Naive thymus-derived CD4-positive, alpha-beta T cell (primary cell): ENCODE measurements at regions of chr13 and their contacts with region 1.

Region 1: GRCh38 chr13:49996951-49997895 is at the start of gene TRIM13:
- DNase-seq: peak; percentile 64 to 85 (median 82)
- ATAC-seq: peak; percentile 88
- H3K4me3 ChIP-seq: peak within 1 kb of the TSS; percentile 97
- H3K4me3 Mint-ChIP-seq: peak within 1 kb of the TSS; percentile 83 to 95 (median 86)
- H3K27ac ChIP-seq: peak within 1 kb of the TSS; percentile 89
- H3K27ac Mint-ChIP-seq: peak within 1 kb of the TSS; percentile 84 to 92 (median 87)
- H3K4me1 ChIP-seq: peaks cover 25 to 31% of the 10 kb centered on the region in 2 donors
- H3K4me1 Mint-ChIP-seq: peaks cover 16 to 57% (median 49%) of the 10 kb centered on the region in 7 donors
- H3K27me3 ChIP-seq: no peaks in the 10 kb centered on the region
- H3K27me3 Mint-ChIP-seq: no peaks in the 10 kb centered on the region
- total RNA-seq, gene TRIM13: 18.3 to 27.1 (median 21.8) TPM

Region 2: DNA sequence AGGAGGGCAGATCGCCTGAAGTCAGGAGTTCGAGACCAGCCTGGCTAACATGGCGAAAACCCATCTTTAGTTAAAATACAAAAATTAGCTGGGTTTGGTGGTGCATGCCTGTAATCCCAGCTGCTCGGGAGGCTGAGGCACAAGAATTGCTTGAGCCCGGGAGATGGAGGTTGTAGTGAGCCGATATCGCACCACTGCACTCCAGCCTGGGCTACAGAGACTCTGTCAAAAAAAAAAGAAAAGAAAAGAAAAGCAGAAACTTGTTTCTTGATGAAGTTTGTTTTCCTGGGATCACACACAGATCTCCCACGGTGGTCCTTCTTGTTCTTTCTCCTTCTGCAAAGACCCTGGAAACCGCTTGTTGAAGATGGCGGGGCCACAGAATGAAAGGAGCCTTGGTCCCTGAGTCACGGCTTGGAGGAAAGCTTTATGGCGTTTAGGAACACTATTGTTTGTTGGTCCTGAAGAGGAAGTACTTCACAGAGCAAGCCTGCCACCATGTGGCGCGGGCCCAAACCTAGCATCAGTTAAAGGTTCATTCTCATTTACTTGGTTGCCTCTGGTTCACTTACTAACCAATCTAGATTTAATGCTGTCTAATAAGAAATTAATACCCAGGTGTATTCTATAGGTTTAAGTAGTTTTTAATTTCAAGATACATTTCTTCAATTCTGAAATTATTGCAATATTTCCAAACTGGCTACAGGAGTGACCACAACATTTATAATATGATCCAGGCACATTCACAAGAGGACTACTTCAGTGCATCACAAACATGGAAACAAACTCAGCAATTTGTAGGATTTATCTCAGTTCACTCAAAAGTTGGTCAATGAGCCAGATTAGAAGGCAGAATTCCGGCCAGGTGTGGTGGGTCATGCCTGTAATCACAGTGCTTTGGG is 390.2 kb before region 1 on chr13:
- CTCF ChIA-PET with region 1: no interaction called
- POLR2A ChIA-PET with region 1: no interaction called
- intact Hi-C with region 1: no loop called
- DNase-seq: peak; percentile 57 to 80 (median 72)
- ATAC-seq: peak; percentile 98
- H3K4me3 ChIP-seq: peak overlapping the region; percentile 49
- H3K4me3 Mint-ChIP-seq: peak overlapping the region; percentile 62 to 92 (median 87)
- H3K27ac ChIP-seq: no peak overlapping the region
- H3K27ac Mint-ChIP-seq: peak overlapping the region in 8 of 9 donors; percentile 43 to 91 (median 75)
- H3K4me1 ChIP-seq: no peaks in the 10 kb centered on the region
- H3K4me1 Mint-ChIP-seq: peaks cover 0 to 7% (median 4%) of the 10 kb centered on the region in 7 donors
- H3K27me3 ChIP-seq: no peaks in the 10 kb centered on the region
- H3K27me3 Mint-ChIP-seq: peaks cover 0 to 5% (median 0%) of the 10 kb centered on the region in 5 donors

Region 3: GRCh38 chr13:49936085-49936940 is 60.9 kb before region 1 on chr13 and contains the start of gene SPRYD7:
- CTCF ChIA-PET with region 1: no interaction called
- POLR2A ChIA-PET with region 1: interaction called, 9 read pairs
- intact Hi-C with region 1: loop called (anchors 1 kb)
- DNase-seq: peak; percentile 82 to 99 (median 90)
- ATAC-seq: peak; percentile 98
- H3K4me3 ChIP-seq: peak within 1 kb of the TSS; percentile 99
- H3K4me3 Mint-ChIP-seq: peak within 1 kb of the TSS; percentile 86 to 99 (median 96)
- H3K27ac ChIP-seq: peak within 1 kb of the TSS; percentile 69
- H3K27ac Mint-ChIP-seq: peak within 1 kb of the TSS; percentile 74 to 95 (median 86)
- H3K4me1 ChIP-seq: peaks cover 10 to 14% of the 10 kb centered on the region in 2 donors
- H3K4me1 Mint-ChIP-seq: peaks cover 12 to 28% (median 15%) of the 10 kb centered on the region in 7 donors
- H3K27me3 ChIP-seq: no peaks in the 10 kb centered on the region
- H3K27me3 Mint-ChIP-seq: peaks cover 0 to 33% (median 0%) of the 10 kb centered on the region in 5 donors
- total RNA-seq, gene SPRYD7: 1.7 to 3.1 (median 2.3) TPM

Region 4: GRCh38 chr13:50081679-50082425 is 84.6 kb after region 1 on chr13:
- CTCF ChIA-PET with region 1: interaction called, 22 read pairs
- POLR2A ChIA-PET with region 1: interaction called, 85 read pairs
- intact Hi-C with region 1: loop called (anchors 1 kb)
- DNase-seq: peak; percentile 94 to 99 (median 99)
- ATAC-seq: peak; percentile 88
- H3K4me3 ChIP-seq: peak overlapping the region; percentile 63
- H3K4me3 Mint-ChIP-seq: peak overlapping the region; percentile 90 to 100 (median 95)
- H3K27ac ChIP-seq: peak overlapping the region; percentile 86
- H3K27ac Mint-ChIP-seq: peak overlapping the region; percentile 88 to 99 (median 94)
- H3K4me1 ChIP-seq: peaks cover 17% of the 10 kb centered on the region in 2 donors
- H3K4me1 Mint-ChIP-seq: peaks cover 13 to 63% (median 49%) of the 10 kb centered on the region in 7 donors
- H3K27me3 ChIP-seq: peaks cover 0 to 8% of the 10 kb centered on the region in 2 donors
- H3K27me3 Mint-ChIP-seq: peaks cover 0 to 11% (median 7%) of the 10 kb centered on the region in 5 donors

Region 5: GRCh38 chr13:50156140-50156539 is 158.9 kb after region 1 on chr13:
- CTCF ChIA-PET with region 1: no interaction called
- POLR2A ChIA-PET with region 1: no interaction called
- intact Hi-C with region 1: no loop called
- DNase-seq: no peak
- ATAC-seq: no peak
- H3K4me3 ChIP-seq: no peak overlapping the region
- H3K4me3 Mint-ChIP-seq: no peak overlapping the region
- H3K27ac ChIP-seq: no peak overlapping the region
- H3K27ac Mint-ChIP-seq: no peak overlapping the region
- H3K4me1 ChIP-seq: peaks cover 0 to 5% of the 10 kb centered on the region in 2 donors
- H3K4me1 Mint-ChIP-seq: peaks cover 6 to 17% (median 15%) of the 10 kb centered on the region in 7 donors
- H3K27me3 ChIP-seq: no peaks in the 10 kb centered on the region
- H3K27me3 Mint-ChIP-seq: peaks cover 0 to 48% (median 3%) of the 10 kb centered on the region in 5 donors

Region 6: DNA sequence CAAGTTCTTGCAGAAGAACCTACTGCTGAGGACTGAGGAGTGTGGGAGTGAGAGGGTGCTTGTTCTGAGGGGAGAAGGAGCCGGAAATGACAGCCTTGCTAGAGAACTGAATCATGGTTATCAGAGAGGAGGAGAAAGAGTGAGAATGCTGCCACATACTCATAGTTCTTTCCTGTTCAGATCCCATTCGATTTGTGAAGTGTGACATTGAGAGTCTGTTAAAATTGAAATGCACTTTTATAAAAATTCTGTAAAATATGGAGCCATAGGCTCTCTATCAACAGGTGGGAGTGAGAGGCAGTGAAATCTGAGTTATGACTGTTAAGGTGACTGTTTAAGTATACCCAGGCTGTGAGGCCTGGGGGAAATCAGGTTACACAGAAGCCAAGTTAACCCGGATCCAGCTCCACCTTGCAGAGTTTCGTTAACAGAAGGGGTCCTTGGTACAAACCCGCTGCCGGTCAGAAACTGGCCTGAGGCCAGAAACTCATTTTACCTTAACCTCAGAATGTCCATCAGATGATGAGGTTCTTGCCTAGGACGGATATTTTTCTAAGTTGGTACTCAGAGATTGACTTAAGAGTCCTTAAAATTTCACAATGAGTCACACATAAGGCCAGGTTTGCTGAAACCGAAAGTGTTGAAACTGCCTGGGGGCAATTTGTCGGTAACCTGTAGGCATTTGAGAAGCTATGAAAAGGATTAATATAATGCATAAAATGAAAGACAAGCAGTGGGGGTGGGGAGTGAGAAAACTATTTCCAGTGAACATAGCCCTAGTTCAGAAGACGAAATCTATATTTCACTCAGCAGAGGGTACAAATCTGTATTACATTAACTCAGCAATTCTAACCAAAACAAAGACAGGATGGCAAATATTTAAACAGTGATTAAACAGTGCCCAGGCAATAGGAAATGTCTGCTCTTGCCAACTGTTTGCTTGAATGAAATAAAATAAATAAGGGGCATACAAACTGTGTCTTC is 368.5 kb after region 1 on chr13:
- CTCF ChIA-PET with region 1: no interaction called
- POLR2A ChIA-PET with region 1: no interaction called
- intact Hi-C with region 1: loop called in 1 of 2 experiments (anchors 5 kb)
- DNase-seq: peak in 4 of 9 donors; percentile 9 to 33 (median 16)
- ATAC-seq: peak; percentile 71
- H3K4me3 ChIP-seq: peak overlapping the region; percentile 7
- H3K4me3 Mint-ChIP-seq: peak overlapping the region in 9 of 10 donors; percentile 7 to 78 (median 68)
- H3K27ac ChIP-seq: peak overlapping the region; percentile 53
- H3K27ac Mint-ChIP-seq: peak overlapping the region; percentile 51 to 88 (median 82)
- H3K4me1 ChIP-seq: peaks cover 6 to 28% of the 10 kb centered on the region in 2 donors
- H3K4me1 Mint-ChIP-seq: peaks cover 14 to 39% (median 25%) of the 10 kb centered on the region in 7 donors
- H3K27me3 ChIP-seq: no peaks in the 10 kb centered on the region
- H3K27me3 Mint-ChIP-seq: peaks cover 0 to 53% (median 5%) of the 10 kb centered on the region in 5 donors

Region 7: DNA sequence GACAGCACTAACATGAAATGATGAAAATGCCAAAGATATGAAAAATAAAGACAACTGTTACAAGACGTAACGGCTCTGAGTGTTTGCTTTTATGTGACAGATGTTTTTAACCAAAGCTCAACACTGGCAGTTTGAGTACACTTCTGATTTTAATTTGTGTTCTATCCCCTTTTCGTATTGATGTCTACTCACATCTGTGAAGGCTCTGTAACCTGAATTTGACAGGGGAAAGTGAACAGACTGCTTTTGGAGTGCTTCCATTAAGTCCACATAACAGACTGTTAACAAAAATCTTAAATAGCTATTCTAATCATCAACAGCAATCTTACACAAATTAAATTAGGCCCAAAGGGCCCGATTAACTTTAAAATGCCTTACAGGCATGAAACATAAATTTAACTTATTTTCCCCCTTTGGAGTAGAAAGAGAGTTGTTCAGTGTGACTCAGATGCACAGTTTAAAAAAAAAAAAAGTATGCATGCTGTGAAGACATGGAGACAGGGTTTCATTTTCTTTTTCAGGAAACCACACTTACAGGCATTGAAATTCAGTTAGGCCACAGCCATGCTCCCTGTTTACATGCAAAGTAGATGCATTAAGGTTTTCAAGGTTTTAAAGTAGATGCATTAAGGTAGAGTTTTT is 896.1 kb after region 1 on chr13:
- CTCF ChIA-PET with region 1: no interaction called
- POLR2A ChIA-PET with region 1: interaction called, 10 read pairs
- intact Hi-C with region 1: loop called (anchors 1 to 5 kb)
- DNase-seq: peak in 7 of 9 donors; percentile 34 to 68 (median 55)
- ATAC-seq: peak; percentile 91
- H3K4me3 ChIP-seq: peak overlapping the region; percentile 30
- H3K4me3 Mint-ChIP-seq: peak overlapping the region; percentile 67 to 88 (median 82)
- H3K27ac ChIP-seq: peak overlapping the region; percentile 69
- H3K27ac Mint-ChIP-seq: peak overlapping the region; percentile 82 to 98 (median 95)
- H3K4me1 ChIP-seq: peaks cover 16 to 27% of the 10 kb centered on the region in 2 donors
- H3K4me1 Mint-ChIP-seq: peaks cover 26 to 50% (median 47%) of the 10 kb centered on the region in 7 donors
- H3K27me3 ChIP-seq: no peaks in the 10 kb centered on the region
- H3K27me3 Mint-ChIP-seq: no peaks in the 10 kb centered on the region

Region 8: GRCh38 chr13:51093574-51093973 is 1096.4 kb after region 1 on chr13:
- CTCF ChIA-PET with region 1: no interaction called
- POLR2A ChIA-PET with region 1: no interaction called
- intact Hi-C with region 1: no loop called
- DNase-seq: no peak
- ATAC-seq: no peak
- H3K4me3 ChIP-seq: no peak overlapping the region
- H3K4me3 Mint-ChIP-seq: no peak overlapping the region
- H3K27ac ChIP-seq: no peak overlapping the region
- H3K27ac Mint-ChIP-seq: no peak overlapping the region
- H3K4me1 ChIP-seq: no peaks in the 10 kb centered on the region
- H3K4me1 Mint-ChIP-seq: peaks cover 0 to 3% (median 0%) of the 10 kb centered on the region in 7 donors
- H3K27me3 ChIP-seq: no peaks in the 10 kb centered on the region
- H3K27me3 Mint-ChIP-seq: peaks cover 6 to 50% (median 17%) of the 10 kb centered on the region in 5 donors